GM12878 (cell line): ENCODE measurements at regions of chr5 and their contacts with region 1.

Region 1: DNA sequence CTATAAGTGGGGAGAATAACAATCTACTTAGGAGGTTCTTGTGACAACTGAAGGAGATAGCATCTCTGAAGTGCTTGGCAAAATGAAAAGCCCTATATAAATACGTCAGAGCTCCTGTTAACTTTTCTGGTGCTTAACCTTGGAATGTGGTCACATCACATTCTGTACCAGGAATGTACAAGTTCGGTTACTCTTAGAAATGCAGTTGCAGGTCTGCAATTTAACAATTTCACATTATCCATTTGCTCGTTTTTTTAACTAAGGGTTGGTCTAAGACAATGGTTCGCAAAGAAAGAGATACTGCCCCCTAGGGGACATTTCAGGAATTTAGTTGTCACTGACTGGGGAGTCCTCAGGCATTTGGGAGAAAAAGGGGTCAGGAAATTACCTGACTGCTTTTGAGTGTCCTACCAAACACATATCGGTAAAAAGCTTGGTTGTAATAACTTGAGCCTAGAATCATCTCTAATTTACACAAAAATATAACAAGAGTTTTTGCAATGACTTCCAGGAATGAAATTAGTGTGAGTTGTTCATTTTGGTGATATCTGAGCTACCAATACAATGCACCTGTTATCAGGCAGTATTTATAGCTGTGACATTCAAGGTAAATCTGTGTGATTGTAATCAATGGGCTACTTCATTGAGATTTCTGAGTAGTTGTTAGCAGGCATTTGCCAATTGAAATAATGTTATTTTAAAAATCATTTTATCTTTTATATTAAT is 5.4 kb upstream of the HBEGF start:
- DNase-seq: no peak
- ATAC-seq: peak; percentile 86
- H3K4me3 ChIP-seq: no peak overlapping the region
- H3K27ac ChIP-seq: no peak overlapping the region
- H3K4me1 ChIP-seq: peaks cover 6% of the 10 kb centered on the region
- H3K27me3 ChIP-seq: no peaks in the 10 kb centered on the region; a peak in 1 of 4 replicates
- CTCF ChIP-seq: peak; percentile 70 to 89 (median 76)
- EP300 ChIP-seq: no peak
- POLR2A ChIP-seq: no peak
- RAD21 ChIP-seq: peak; percentile 89

Region 2: DNA sequence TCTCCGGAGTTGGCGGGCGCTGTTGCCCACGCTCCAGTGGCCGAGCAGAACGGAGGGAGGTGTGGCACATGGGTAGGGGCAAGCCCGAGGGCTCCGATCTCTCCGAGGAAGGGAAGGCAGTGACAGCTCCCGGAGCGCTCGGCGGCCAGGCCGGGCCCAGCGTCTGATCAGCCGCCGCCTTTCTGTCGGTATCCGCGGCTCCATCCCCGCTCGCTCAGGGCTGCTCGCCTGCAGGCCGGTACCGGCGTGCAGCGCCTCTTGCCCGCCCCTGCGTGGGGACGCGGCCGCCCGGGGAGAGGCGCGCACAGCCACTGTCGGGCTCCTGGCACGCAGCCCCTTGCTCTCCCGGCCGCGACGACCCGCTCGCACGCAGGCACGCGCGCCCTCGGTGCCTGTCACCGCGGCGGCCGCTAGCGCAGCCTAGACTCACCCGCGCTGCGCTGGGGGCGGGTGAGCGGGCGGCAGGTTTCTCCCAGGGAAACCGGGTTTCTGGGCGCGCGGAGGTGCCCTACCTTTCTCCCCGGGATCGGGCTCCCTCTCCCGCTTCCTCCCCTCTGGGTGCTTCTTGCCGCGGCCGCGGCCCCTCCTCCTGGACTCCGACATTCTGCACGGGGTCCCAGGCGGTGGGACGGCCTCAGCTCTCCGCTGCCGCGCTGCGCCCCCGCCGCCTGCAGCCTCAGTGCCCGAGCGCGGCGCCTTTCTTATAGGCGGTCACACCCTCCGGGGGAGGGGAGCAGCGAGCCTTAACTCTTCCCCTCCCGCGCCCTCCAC is 447.8 kb before region 1 on chr5:
- CTCF ChIA-PET with region 1: no interaction called
- POLR2A ChIA-PET with region 1: no interaction called
- RAD21 ChIA-PET with region 1: no interaction called
- SMC1A ChIA-PET with region 1: no interaction called
- in situ Hi-C with region 1: no loop called
- intact Hi-C with region 1: no loop called
- DNase-seq: no peak
- ATAC-seq: peak; percentile 80
- H3K4me3 ChIP-seq: peak overlapping the region; percentile 46; the same call in 1 of the 2 replicates
- H3K27ac ChIP-seq: no peak overlapping the region
- H3K4me1 ChIP-seq: no peaks in the 10 kb centered on the region; the same call in 1 of the 2 replicates
- H3K27me3 ChIP-seq: peaks cover 0 to 13% of the 10 kb centered on the region in 2 experiments; a peak in 2 of 4 replicates
- CTCF ChIP-seq: no peak
- EP300 ChIP-seq: no peak
- POLR2A ChIP-seq: no peak
- RAD21 ChIP-seq: no peak

Region 3: DNA sequence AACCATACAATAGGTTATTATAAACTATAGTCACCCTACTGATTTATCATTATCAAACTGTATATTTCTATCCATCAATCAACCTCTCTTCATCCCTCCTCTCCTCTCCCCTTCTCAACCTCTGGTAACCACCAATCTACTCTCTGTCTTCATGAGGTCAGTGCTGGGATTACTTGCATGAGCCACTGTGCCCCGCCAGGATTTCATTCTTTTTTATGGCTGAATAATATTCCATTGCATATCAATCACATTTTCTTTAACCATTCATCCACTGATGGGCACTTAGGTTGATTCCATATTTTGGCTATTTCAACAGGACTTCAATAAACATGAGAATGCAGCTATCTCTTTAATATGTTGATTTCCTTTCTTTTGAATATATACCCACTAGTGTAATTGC is 248.6 kb before region 1 on chr5:
- CTCF ChIA-PET with region 1: no interaction called
- POLR2A ChIA-PET with region 1: no interaction called
- RAD21 ChIA-PET with region 1: no interaction called
- SMC1A ChIA-PET with region 1: no interaction called
- in situ Hi-C with region 1: no loop called
- intact Hi-C with region 1: no loop called
- DNase-seq: no peak
- ATAC-seq: no peak
- H3K4me3 ChIP-seq: no peak overlapping the region
- H3K27ac ChIP-seq: no peak overlapping the region
- H3K4me1 ChIP-seq: peaks cover 8% of the 10 kb centered on the region
- H3K27me3 ChIP-seq: no peaks in the 10 kb centered on the region
- CTCF ChIP-seq: no peak
- EP300 ChIP-seq: no peak
- POLR2A ChIP-seq: no peak
- RAD21 ChIP-seq: no peak

Region 4: DNA sequence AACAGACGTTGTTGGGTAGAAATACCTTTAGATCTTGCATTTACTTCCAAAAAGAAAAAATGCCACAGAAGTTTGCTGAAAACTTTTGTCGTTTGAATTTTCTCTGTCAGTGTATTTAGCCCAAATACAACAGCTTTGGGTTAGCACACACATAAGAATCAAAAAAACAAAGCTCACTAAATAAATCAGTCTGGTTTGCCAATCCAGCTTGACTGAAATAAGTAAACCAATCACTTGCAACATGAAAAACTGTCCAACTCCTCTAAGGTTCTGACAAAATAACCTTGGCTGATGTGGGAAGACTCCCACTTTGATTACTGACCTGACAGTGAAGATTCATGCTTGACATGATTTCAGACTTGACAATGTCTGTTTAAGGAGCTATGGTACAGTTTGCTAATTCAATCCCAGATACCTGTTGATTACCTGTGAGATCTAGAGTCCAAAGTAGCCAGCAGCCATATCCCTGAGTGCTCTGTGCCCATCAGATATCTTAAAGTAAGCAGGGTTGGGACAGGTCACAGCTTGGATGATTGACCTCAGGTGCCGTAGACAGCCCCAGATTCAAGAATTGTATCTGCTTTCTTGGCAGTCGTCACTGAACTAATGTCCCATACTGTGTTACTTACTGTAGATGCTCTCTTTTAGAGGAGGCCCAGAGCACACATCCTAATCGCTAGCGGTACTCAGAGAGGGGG is 225.3 kb before region 1 on chr5:
- CTCF ChIA-PET with region 1: no interaction called
- POLR2A ChIA-PET with region 1: no interaction called
- RAD21 ChIA-PET with region 1: no interaction called
- SMC1A ChIA-PET with region 1: no interaction called
- in situ Hi-C with region 1: no loop called
- intact Hi-C with region 1: no loop called
- DNase-seq: no peak
- ATAC-seq: no peak
- H3K4me3 ChIP-seq: no peak overlapping the region
- H3K27ac ChIP-seq: no peak overlapping the region
- H3K4me1 ChIP-seq: peaks cover 4% of the 10 kb centered on the region
- H3K27me3 ChIP-seq: no peaks in the 10 kb centered on the region
- CTCF ChIP-seq: no peak
- EP300 ChIP-seq: no peak
- POLR2A ChIP-seq: no peak
- RAD21 ChIP-seq: no peak

Region 5: GRCh38 chr5:140169410-140169809 is 182.4 kb before region 1 on chr5:
- CTCF ChIA-PET with region 1: interaction called, 15 read pairs
- POLR2A ChIA-PET with region 1: no interaction called
- RAD21 ChIA-PET with region 1: interaction called, 5 read pairs
- SMC1A ChIA-PET with region 1: interaction called, 4 read pairs
- in situ Hi-C with region 1: no loop called
- intact Hi-C with region 1: no loop called
- DNase-seq: no peak
- ATAC-seq: peak; percentile 68
- H3K4me3 ChIP-seq: no peak overlapping the region
- H3K27ac ChIP-seq: no peak overlapping the region
- H3K4me1 ChIP-seq: peaks cover 18% of the 10 kb centered on the region
- H3K27me3 ChIP-seq: no peaks in the 10 kb centered on the region
- CTCF ChIP-seq: peak in 1 of 3 experiments; percentile 47; a peak in 2 of 6 replicates
- EP300 ChIP-seq: no peak
- POLR2A ChIP-seq: no peak
- RAD21 ChIP-seq: 0 out of 2 replicates have a peak, but pooled peaks have one; percentile 10

Region 6: GRCh38 chr5:140261403-140262171 is 90.2 kb before region 1 on chr5:
- CTCF ChIA-PET with region 1: interaction called, 35 read pairs
- POLR2A ChIA-PET with region 1: no interaction called
- RAD21 ChIA-PET with region 1: interaction called, 9 read pairs
- SMC1A ChIA-PET with region 1: interaction called, 7 read pairs
- in situ Hi-C with region 1: no loop called
- intact Hi-C with region 1: no loop called
- DNase-seq: no peak
- ATAC-seq: no peak
- H3K4me3 ChIP-seq: no peak overlapping the region
- H3K27ac ChIP-seq: no peak overlapping the region
- H3K4me1 ChIP-seq: peaks cover 15% of the 10 kb centered on the region
- H3K27me3 ChIP-seq: no peaks in the 10 kb centered on the region
- CTCF ChIP-seq: no peak
- EP300 ChIP-seq: no peak
- POLR2A ChIP-seq: no peak
- RAD21 ChIP-seq: no peak

Region 7: DNA sequence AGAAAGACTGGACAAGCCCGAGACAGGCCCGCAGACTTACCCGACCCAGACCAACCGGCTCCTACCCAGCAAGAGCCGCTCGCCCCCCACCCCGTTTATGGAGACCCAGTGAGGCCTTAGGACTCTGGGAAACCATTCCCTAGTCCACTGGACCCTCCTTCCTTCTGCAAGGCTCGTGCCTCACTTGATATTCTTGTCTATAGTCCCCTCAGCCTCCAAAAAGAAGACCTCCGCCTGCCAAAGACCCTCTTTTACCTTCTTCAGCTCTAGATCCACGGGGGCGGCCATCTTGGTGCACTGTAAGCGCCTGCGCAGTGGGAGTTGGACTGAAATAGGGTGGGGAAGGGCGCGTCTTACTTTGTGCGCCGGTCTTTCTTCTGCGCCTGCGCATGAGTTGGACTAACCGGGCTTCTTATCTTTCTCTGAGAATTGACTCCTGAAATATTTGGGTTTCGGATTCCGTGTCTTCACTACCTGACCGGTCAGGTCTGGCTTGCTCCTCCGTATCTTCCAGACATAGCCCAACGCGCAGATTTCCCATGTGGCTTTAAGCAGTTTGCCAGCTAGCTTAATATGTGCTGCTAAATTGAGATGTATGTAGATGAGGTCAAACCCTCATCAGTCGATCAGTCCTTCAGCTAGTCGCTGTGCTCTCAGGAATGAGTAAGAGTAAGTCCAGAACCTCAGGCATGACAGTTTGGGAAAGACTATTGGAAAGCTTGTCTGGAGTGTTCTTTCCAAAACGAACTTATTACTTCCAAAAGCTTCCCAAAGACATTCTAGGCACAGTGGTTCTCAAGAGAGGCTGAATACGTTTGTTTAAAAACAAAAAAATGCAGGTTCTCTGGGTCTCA is 48.8 kb before region 1 on chr5 and contains the start of gene PFDN1:
- CTCF ChIA-PET with region 1: interaction called, 19 read pairs
- POLR2A ChIA-PET with region 1: interaction called, 7 read pairs
- RAD21 ChIA-PET with region 1: interaction called, 7 read pairs
- SMC1A ChIA-PET with region 1: interaction called, 6 read pairs
- in situ Hi-C with region 1: no loop called
- intact Hi-C with region 1: loop called (anchors 5 kb)
- DNase-seq: peak; percentile 76
- ATAC-seq: peak; percentile 97
- H3K4me3 ChIP-seq: peak within 1 kb of the TSS; percentile 90
- H3K27ac ChIP-seq: peak within 1 kb of the TSS; percentile 70
- H3K4me1 ChIP-seq: no peaks in the 10 kb centered on the region
- H3K27me3 ChIP-seq: no peaks in the 10 kb centered on the region
- CTCF ChIP-seq: no peak
- EP300 ChIP-seq: no peak
- POLR2A ChIP-seq: peak; percentile 77
- RAD21 ChIP-seq: no peak
- polyA plus RNA-seq, gene PFDN1: 192 to 193 TPM

Region 8: GRCh38 chr5:140336388-140336787 is 15.4 kb before region 1 on chr5:
- CTCF ChIA-PET with region 1: interaction called, 21 read pairs
- POLR2A ChIA-PET with region 1: no interaction called
- RAD21 ChIA-PET with region 1: interaction called, 6 read pairs
- SMC1A ChIA-PET with region 1: interaction called, 5 read pairs
- in situ Hi-C with region 1: no loop called
- intact Hi-C with region 1: no loop called
- DNase-seq: no peak
- ATAC-seq: no peak
- H3K4me3 ChIP-seq: no peak overlapping the region
- H3K27ac ChIP-seq: no peak overlapping the region
- H3K4me1 ChIP-seq: peaks cover 13% of the 10 kb centered on the region
- H3K27me3 ChIP-seq: no peaks in the 10 kb centered on the region
- CTCF ChIP-seq: no peak
- EP300 ChIP-seq: no peak
- POLR2A ChIP-seq: no peak
- RAD21 ChIP-seq: no peak

Region 9: GRCh38 chr5:140372971-140373487 is 21.3 kb after region 1 on chr5:
- CTCF ChIA-PET with region 1: interaction called, 12 read pairs
- POLR2A ChIA-PET with region 1: no interaction called
- RAD21 ChIA-PET with region 1: no interaction called
- SMC1A ChIA-PET with region 1: interaction called, 4 read pairs
- in situ Hi-C with region 1: no loop called
- intact Hi-C with region 1: no loop called
- DNase-seq: no peak
- ATAC-seq: peak; percentile 86
- H3K4me3 ChIP-seq: no peak overlapping the region
- H3K27ac ChIP-seq: no peak overlapping the region
- H3K4me1 ChIP-seq: no peaks in the 10 kb centered on the region
- H3K27me3 ChIP-seq: no peaks in the 10 kb centered on the region
- CTCF ChIP-seq: peak; percentile 81 to 88 (median 83)
- EP300 ChIP-seq: no peak
- POLR2A ChIP-seq: no peak
- RAD21 ChIP-seq: peak; percentile 85

Region 10: DNA sequence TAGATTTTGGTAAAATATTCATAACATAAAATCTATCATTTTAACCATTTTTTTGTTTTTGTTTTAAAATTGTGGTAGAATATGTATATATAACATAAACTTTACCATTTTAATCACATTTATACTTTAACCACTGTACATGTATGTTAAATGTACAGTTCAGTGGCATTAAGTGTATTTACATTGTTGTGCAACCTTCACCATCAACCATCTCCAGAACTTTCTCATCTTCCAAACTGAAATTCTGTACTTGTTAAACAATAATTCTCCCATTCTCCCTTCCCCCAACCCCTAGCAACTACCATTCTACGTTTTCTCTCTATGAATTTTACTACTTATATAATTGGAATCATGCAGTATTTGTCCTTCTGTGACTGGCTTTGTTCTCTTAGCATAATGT is 61.5 kb after region 1 on chr5:
- CTCF ChIA-PET with region 1: no interaction called
- POLR2A ChIA-PET with region 1: no interaction called
- RAD21 ChIA-PET with region 1: no interaction called
- SMC1A ChIA-PET with region 1: no interaction called
- in situ Hi-C with region 1: no loop called
- intact Hi-C with region 1: no loop called
- DNase-seq: no peak
- ATAC-seq: no peak
- H3K4me3 ChIP-seq: no peak overlapping the region
- H3K27ac ChIP-seq: no peak overlapping the region
- H3K4me1 ChIP-seq: no peaks in the 10 kb centered on the region
- H3K27me3 ChIP-seq: no peaks in the 10 kb centered on the region
- CTCF ChIP-seq: no peak
- EP300 ChIP-seq: no peak
- POLR2A ChIP-seq: no peak
- RAD21 ChIP-seq: no peak